Endothelial cell of umbilical vein (primary cell): ENCODE measurements at regions of chr7 and their contacts with region 1.

Region 1: GRCh38 chr7:95684037-95684436 is 87.7 kb upstream of the PDK4 start:
- DNase-seq: peak; percentile 48
- H3K4me3 ChIP-seq: no peak overlapping the region
- H3K27ac ChIP-seq: no peak overlapping the region
- H3K4me1 ChIP-seq: no peaks in the 10 kb centered on the region
- H3K27me3 ChIP-seq: peaks cover 0 to 2% of the 10 kb centered on the region in 2 experiments
- CTCF ChIP-seq: peak; percentile 11 to 16
- POLR2A ChIP-seq: no peak

Region 2: GRCh38 chr7:95527033-95527775 is 156.8 kb before region 1 on chr7:
- CTCF ChIA-PET with region 1: interaction called, 917 read pairs
- POLR2A ChIA-PET with region 1: no interaction called
- dilution Hi-C with region 1: no loop called
- intact Hi-C with region 1: loop called (anchors 1 kb)
- DNase-seq: peak; percentile 52
- H3K4me3 ChIP-seq: no peak overlapping the region
- H3K27ac ChIP-seq: no peak overlapping the region
- H3K4me1 ChIP-seq: peaks cover 2% of the 10 kb centered on the region
- H3K27me3 ChIP-seq: peaks cover 12 to 13% of the 10 kb centered on the region in 2 experiments
- CTCF ChIP-seq: peak; percentile 75 to 78
- POLR2A ChIP-seq: no peak

Region 3: DNA sequence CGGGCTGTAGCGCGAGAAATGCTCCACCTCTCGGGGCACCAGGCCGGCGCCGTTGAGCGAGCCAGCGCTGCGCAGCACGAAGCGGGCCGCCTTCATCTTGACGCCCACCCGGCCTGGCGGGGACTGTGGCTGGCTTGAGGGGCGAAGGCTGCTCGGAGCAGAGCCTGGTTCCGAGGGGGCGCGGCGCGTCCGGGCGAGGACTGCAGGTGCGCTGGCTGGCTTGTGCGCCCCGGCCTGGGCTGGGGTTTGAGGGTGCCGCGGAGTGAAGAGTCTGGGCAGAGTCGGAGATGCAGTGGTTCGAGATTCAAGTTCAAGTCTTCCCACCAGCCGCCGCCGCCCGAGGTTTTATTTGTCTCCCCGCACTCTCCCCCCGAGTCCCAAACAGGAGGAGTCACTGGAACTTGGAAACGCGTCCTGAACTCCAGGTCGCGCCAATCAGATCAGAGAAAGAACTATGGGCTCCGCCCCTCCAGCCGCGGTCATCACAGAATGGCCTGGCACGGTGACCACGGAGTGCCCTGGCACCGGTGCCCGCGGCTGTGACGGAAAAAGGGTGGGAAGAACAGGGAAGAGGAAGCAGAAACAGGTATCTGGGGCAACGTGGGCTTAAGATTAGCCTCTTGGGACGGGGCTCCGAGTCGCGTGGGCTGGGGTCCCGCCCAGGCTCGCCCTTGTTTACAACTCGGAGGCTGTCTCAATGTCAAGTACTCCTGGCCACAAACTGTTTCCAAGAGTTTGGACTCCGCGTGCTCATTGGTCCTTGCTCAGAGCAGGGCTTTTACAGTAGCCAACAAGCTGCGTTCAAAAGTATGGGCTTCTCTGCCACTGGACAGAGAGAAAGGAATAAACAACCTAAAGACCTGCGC is 87.6 kb before region 1 on chr7 and contains the start of gene PDK4:
- CTCF ChIA-PET with region 1: interaction called, 4 read pairs
- POLR2A ChIA-PET with region 1: no interaction called
- dilution Hi-C with region 1: no loop called
- intact Hi-C with region 1: loop called (anchors 5 kb)
- DNase-seq: peak; percentile 93
- H3K4me3 ChIP-seq: peak within 1 kb of the TSS; percentile 14 to 49 (median 36)
- H3K27ac ChIP-seq: no peak within 1 kb of the TSS
- H3K4me1 ChIP-seq: peaks cover 3% of the 10 kb centered on the region
- H3K27me3 ChIP-seq: peaks cover 3% of the 10 kb centered on the region in 2 experiments
- CTCF ChIP-seq: no peak
- POLR2A ChIP-seq: no peak
- total RNA-seq, gene PDK4: 1.2 and 2.5 TPM in 2 replicates